ENCODE measurements at regions of chr2 and their contacts with region 1.

Region 1: GRCh38 chr2:232026910-232027309 is 65.4 kb downstream of the DIS3L2 start:
- DNase-seq: peak; percentile 63
- H3K4me3 Mint-ChIP-seq: no peak overlapping the region
- H3K27ac Mint-ChIP-seq: no peak overlapping the region
- H3K4me1 Mint-ChIP-seq: peaks cover 22% of the 10 kb centered on the region
- H3K27me3 Mint-ChIP-seq: peaks cover 12% of the 10 kb centered on the region

Region 2: GRCh38 chr2:231752061-231752460 is 274.8 kb before region 1 on chr2:
- intact Hi-C with region 1: no loop called
- DNase-seq: no peak
- H3K4me3 Mint-ChIP-seq: no peak overlapping the region
- H3K27ac Mint-ChIP-seq: no peak overlapping the region
- H3K4me1 Mint-ChIP-seq: peaks cover 2% of the 10 kb centered on the region
- H3K27me3 Mint-ChIP-seq: no peaks in the 10 kb centered on the region

Region 3: DNA sequence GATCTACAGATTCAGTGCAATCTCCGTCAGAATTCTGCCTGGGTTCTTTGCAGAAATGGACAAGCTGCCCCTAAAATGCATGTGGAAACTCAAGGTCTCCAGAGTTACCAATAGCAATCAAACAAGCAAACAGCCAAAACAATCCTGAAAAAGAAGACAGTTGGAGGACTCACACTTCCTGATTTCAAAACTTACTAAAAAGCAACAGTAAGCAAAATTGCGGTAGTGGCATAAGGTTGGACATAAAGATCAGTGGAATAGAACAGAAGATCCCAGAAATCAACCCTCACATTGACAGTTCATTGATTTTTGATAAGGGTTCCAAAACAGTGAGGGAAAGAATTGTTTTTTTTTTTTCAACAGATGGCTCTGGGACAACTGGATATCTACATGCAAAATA is 160.5 kb before region 1 on chr2:
- intact Hi-C with region 1: no loop called
- DNase-seq: no peak
- H3K4me3 Mint-ChIP-seq: no peak overlapping the region
- H3K27ac Mint-ChIP-seq: no peak overlapping the region
- H3K4me1 Mint-ChIP-seq: no peaks in the 10 kb centered on the region
- H3K27me3 Mint-ChIP-seq: peaks cover 5% of the 10 kb centered on the region

Region 4: DNA sequence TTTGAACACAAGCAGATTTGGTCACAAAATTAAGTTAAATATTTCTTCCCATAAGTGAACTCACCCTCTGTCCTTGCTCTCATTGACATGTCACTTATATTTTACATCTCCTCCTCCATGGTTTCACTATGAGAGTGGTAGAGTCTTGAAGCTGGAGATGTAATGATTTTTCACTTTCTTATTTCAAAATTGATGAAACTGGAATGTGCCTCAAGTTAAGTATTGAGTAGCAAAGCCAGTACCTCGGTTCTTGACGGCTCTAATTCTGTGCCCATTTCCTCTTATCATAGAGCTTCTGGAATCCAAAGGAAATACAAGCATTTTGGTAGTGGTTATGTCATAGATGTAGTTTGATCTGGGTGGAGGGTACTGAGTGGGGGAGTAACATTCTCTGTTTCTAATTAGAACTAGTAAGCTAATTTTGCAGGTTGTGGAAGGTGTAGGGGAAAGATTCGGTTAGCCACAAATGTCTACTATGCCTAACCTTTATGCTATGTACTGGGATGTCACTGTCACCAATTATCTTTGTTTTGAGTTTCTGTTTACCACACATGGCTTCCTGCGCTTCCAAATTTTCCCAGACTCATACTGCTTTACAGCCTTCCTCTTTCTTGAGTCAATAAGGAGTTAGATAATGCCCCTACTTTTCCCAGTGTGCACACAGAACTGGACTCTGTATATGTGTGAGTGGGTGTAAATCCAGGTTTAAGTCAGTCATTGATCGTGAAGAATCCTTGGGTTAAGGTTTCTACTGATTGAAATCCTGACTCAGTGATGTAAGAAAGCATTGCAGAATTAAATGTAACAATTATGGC is 31.4 kb after region 1 on chr2:
- intact Hi-C with region 1: loop called (anchors 1 kb)
- DNase-seq: no peak
- H3K4me3 Mint-ChIP-seq: no peak overlapping the region
- H3K27ac Mint-ChIP-seq: no peak overlapping the region
- H3K4me1 Mint-ChIP-seq: peaks cover 8% of the 10 kb centered on the region
- H3K27me3 Mint-ChIP-seq: peaks cover 15% of the 10 kb centered on the region

Region 5: GRCh38 chr2:232315049-232315922 is 288.4 kb after region 1 on chr2:
- intact Hi-C with region 1: loop called (anchors 10 kb)
- DNase-seq: peak; percentile 92
- H3K4me3 Mint-ChIP-seq: peak overlapping the region; percentile 81
- H3K27ac Mint-ChIP-seq: peak overlapping the region; percentile 94
- H3K4me1 Mint-ChIP-seq: peaks cover 55% of the 10 kb centered on the region
- H3K27me3 Mint-ChIP-seq: no peaks in the 10 kb centered on the region